Caco-2 (cell line): ENCODE measurements at regions of chr2 and their contacts with region 1.

Region 1: DNA sequence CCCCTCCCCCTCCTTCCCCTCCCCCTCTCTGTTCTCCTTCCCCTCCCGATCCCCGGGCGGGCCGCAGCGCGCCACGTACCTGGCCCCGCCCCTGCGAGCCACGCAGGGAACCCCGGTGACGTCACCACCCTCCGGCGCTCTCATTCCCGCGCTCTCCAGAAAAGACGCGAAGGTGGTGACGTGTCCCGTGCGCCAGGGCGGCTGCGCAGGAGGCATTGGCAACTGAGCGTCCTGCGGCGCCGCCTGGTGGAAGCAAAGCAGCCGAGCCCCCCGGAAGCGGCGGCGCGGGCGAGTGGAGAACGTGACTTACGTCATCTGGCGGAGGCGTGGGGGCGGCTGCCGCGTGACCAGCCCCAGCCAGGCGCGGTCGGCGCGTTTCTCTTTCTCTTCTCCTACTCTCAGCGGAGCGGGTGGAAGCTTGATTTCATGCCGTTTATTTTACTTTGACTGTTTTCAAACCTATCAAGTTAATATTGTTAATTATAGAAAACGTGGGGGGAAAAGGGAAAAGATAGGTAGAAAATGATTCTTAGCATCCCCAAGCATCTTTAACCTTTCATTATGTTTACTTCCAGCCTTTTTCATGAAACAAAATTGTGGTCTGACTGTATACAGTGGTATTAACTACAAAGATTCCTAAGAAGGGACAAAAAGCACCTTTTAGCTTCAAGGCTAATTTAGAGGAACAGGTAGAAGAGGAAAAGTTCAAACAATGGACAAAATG is 48.1 kb downstream of the C2orf42 start:
- DNase-seq: peak; percentile 99 to 100
- H3K4me3 ChIP-seq: peak overlapping the region; percentile 64
- H3K4me3 Mint-ChIP-seq: peak overlapping the region; percentile 83
- H3K27ac Mint-ChIP-seq: peak overlapping the region; percentile 99
- H3K4me1 ChIP-seq: peaks cover 32% of the 10 kb centered on the region
- H3K4me1 Mint-ChIP-seq: peaks cover 21% of the 10 kb centered on the region
- H3K27me3 ChIP-seq: no peaks in the 10 kb centered on the region
- H3K27me3 Mint-ChIP-seq: no peaks in the 10 kb centered on the region
- CTCF ChIP-seq: peak; percentile 94 to 95

Region 2: GRCh38 chr2:69933839-69934613 is 208.7 kb before region 1 on chr2:
- CTCF ChIA-PET with region 1: no interaction called
- POLR2A ChIA-PET with region 1: interaction called, 6 read pairs
- intact Hi-C with region 1: loop called (anchors 1 kb)
- DNase-seq: peak; percentile 52 to 56
- H3K4me3 ChIP-seq: no peak overlapping the region
- H3K4me3 Mint-ChIP-seq: peak overlapping the region; percentile 58
- H3K27ac Mint-ChIP-seq: peak overlapping the region; percentile 82
- H3K4me1 ChIP-seq: peaks cover 23% of the 10 kb centered on the region
- H3K4me1 Mint-ChIP-seq: peaks cover 31% of the 10 kb centered on the region
- H3K27me3 ChIP-seq: no peaks in the 10 kb centered on the region
- H3K27me3 Mint-ChIP-seq: no peaks in the 10 kb centered on the region
- CTCF ChIP-seq: no peak

Region 3: GRCh38 chr2:70086838-70087701 is 55.7 kb before region 1 on chr2 and contains the start of gene PCBP1:
- CTCF ChIA-PET with region 1: interaction called, 4 read pairs
- POLR2A ChIA-PET with region 1: interaction called, 28 read pairs
- intact Hi-C with region 1: loop called (anchors 1 kb)
- DNase-seq: peak; percentile 96 to 98
- H3K4me3 ChIP-seq: peak within 1 kb of the TSS; percentile 68
- H3K4me3 Mint-ChIP-seq: peak within 1 kb of the TSS; percentile 92
- H3K27ac Mint-ChIP-seq: peak within 1 kb of the TSS; percentile 100
- H3K4me1 ChIP-seq: peaks cover 17% of the 10 kb centered on the region; the same call in 1 of the 2 replicates
- H3K4me1 Mint-ChIP-seq: peaks cover 29% of the 10 kb centered on the region
- H3K27me3 ChIP-seq: no peaks in the 10 kb centered on the region
- H3K27me3 Mint-ChIP-seq: no peaks in the 10 kb centered on the region
- CTCF ChIP-seq: no peak
- total RNA-seq, gene PCBP1: 308 and 319 TPM in 2 replicates

Region 4: GRCh38 chr2:70124983-70125480 is 17.7 kb before region 1 on chr2:
- CTCF ChIA-PET with region 1: interaction called, 6 read pairs
- POLR2A ChIA-PET with region 1: interaction called, 36 read pairs
- intact Hi-C with region 1: loop called (anchors 1 kb)
- DNase-seq: peak; percentile 72 to 76
- H3K4me3 ChIP-seq: peak overlapping the region; percentile 84
- H3K4me3 Mint-ChIP-seq: peak overlapping the region; percentile 91
- H3K27ac Mint-ChIP-seq: peak overlapping the region; percentile 99
- H3K4me1 ChIP-seq: peaks cover 29% of the 10 kb centered on the region
- H3K4me1 Mint-ChIP-seq: peaks cover 35% of the 10 kb centered on the region
- H3K27me3 ChIP-seq: no peaks in the 10 kb centered on the region
- H3K27me3 Mint-ChIP-seq: no peaks in the 10 kb centered on the region
- CTCF ChIP-seq: no peak

Region 5: GRCh38 chr2:70161069-70161534 is 18.4 kb after region 1 on chr2:
- CTCF ChIA-PET with region 1: no interaction called
- POLR2A ChIA-PET with region 1: no interaction called
- intact Hi-C with region 1: no loop called
- DNase-seq: no peak
- H3K4me3 ChIP-seq: no peak overlapping the region
- H3K4me3 Mint-ChIP-seq: no peak overlapping the region
- H3K27ac Mint-ChIP-seq: no peak overlapping the region
- H3K4me1 ChIP-seq: no peaks in the 10 kb centered on the region
- H3K4me1 Mint-ChIP-seq: no peaks in the 10 kb centered on the region
- H3K27me3 ChIP-seq: no peaks in the 10 kb centered on the region
- H3K27me3 Mint-ChIP-seq: no peaks in the 10 kb centered on the region
- CTCF ChIP-seq: no peak

Region 6: GRCh38 chr2:70301344-70302194 is 158.8 kb after region 1 on chr2 and contains the start of gene FAM136A:
- CTCF ChIA-PET with region 1: interaction called, 7 read pairs
- POLR2A ChIA-PET with region 1: interaction called, 17 read pairs
- intact Hi-C with region 1: no loop called
- DNase-seq: peak; percentile 91 to 98
- H3K4me3 ChIP-seq: peak within 1 kb of the TSS; percentile 99
- H3K4me3 Mint-ChIP-seq: peak within 1 kb of the TSS; percentile 96
- H3K27ac Mint-ChIP-seq: peak within 1 kb of the TSS; percentile 95
- H3K4me1 ChIP-seq: peaks cover 5% of the 10 kb centered on the region
- H3K4me1 Mint-ChIP-seq: no peaks in the 10 kb centered on the region
- H3K27me3 ChIP-seq: no peaks in the 10 kb centered on the region
- H3K27me3 Mint-ChIP-seq: no peaks in the 10 kb centered on the region
- CTCF ChIP-seq: peak; percentile 94 to 95
- total RNA-seq, gene FAM136A: 115 and 120 TPM in 2 replicates

Region 7: GRCh38 chr2:70321370-70321769 is 178.6 kb after region 1 on chr2:
- CTCF ChIA-PET with region 1: no interaction called
- POLR2A ChIA-PET with region 1: no interaction called
- intact Hi-C with region 1: no loop called
- DNase-seq: no peak
- H3K4me3 ChIP-seq: no peak overlapping the region
- H3K4me3 Mint-ChIP-seq: no peak overlapping the region
- H3K27ac Mint-ChIP-seq: no peak overlapping the region
- H3K4me1 ChIP-seq: no peaks in the 10 kb centered on the region
- H3K4me1 Mint-ChIP-seq: no peaks in the 10 kb centered on the region
- H3K27me3 ChIP-seq: no peaks in the 10 kb centered on the region
- H3K27me3 Mint-ChIP-seq: peaks cover 15% of the 10 kb centered on the region
- CTCF ChIP-seq: no peak